ENCODE measurements at regions of chr2 and their contacts with region 1.

Region 1: DNA sequence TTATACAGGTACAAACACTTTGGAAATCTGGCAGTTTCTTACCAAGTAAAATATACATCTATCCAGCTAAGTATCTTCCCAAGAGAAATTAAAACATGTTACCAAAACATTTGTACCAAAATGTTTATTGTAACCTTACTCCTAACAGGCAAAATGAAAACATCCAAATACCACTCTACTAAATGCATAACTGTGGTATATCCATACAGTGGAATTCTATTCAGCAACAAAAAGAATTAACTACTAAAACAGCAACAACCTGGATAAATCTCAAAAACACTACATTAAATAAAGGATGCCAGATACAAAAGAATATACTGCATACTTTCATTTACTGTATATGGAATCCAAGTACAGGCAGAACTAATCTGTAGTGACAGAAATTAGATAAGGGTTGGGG is 51.1 kb downstream of the TLK1 start:
- DNase-seq: no peak
- ATAC-seq: no peak
- H3K4me3 ChIP-seq: no peak overlapping the region
- H3K4me3 Mint-ChIP-seq: no peak overlapping the region
- H3K27ac ChIP-seq: no peak overlapping the region
- H3K27ac Mint-ChIP-seq: peak overlapping the region; percentile 20
- H3K4me1 ChIP-seq: no peaks in the 10 kb centered on the region
- H3K4me1 Mint-ChIP-seq: peaks cover 52% of the 10 kb centered on the region
- H3K27me3 ChIP-seq: no peaks in the 10 kb centered on the region
- H3K27me3 Mint-ChIP-seq: no peaks in the 10 kb centered on the region
- CTCF ChIP-seq: no peak

Region 2: GRCh38 chr2:171069286-171069956 is 40.1 kb before region 1 on chr2:
- CTCF ChIA-PET with region 1: no interaction called
- POLR2A ChIA-PET with region 1: no interaction called
- intact Hi-C with region 1: no loop called
- DNase-seq: no peak
- ATAC-seq: no peak
- H3K4me3 ChIP-seq: no peak overlapping the region
- H3K4me3 Mint-ChIP-seq: no peak overlapping the region
- H3K27ac ChIP-seq: no peak overlapping the region
- H3K27ac Mint-ChIP-seq: no peak overlapping the region
- H3K4me1 ChIP-seq: no peaks in the 10 kb centered on the region
- H3K4me1 Mint-ChIP-seq: peaks cover 14% of the 10 kb centered on the region
- H3K27me3 ChIP-seq: no peaks in the 10 kb centered on the region
- H3K27me3 Mint-ChIP-seq: no peaks in the 10 kb centered on the region
- CTCF ChIP-seq: no peak

Region 3: DNA sequence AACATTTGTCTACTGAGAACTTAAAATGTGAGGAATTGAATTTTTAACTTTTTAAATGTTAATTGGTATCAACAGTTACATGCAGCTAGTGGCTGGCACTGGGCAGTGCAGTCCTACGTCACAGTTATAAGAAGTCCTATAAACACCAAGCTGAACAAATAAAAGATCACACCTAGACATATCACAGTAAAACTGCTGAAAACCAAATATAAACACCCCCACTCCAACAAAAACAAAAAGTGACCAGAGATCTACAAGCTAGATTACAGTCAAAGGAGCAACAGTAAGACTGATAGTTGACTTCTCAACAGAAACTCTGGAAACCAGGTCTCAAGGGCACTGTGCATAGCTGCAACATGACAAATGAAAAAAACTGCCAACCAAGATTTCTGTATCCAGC is 31.7 kb after region 1 on chr2:
- CTCF ChIA-PET with region 1: no interaction called
- POLR2A ChIA-PET with region 1: no interaction called
- intact Hi-C with region 1: no loop called
- DNase-seq: no peak
- ATAC-seq: no peak
- H3K4me3 ChIP-seq: no peak overlapping the region
- H3K4me3 Mint-ChIP-seq: no peak overlapping the region
- H3K27ac ChIP-seq: no peak overlapping the region
- H3K27ac Mint-ChIP-seq: no peak overlapping the region
- H3K4me1 ChIP-seq: peaks cover 29% of the 10 kb centered on the region
- H3K4me1 Mint-ChIP-seq: peaks cover 83% of the 10 kb centered on the region
- H3K27me3 ChIP-seq: no peaks in the 10 kb centered on the region
- H3K27me3 Mint-ChIP-seq: no peaks in the 10 kb centered on the region
- CTCF ChIP-seq: no peak

Region 4: DNA sequence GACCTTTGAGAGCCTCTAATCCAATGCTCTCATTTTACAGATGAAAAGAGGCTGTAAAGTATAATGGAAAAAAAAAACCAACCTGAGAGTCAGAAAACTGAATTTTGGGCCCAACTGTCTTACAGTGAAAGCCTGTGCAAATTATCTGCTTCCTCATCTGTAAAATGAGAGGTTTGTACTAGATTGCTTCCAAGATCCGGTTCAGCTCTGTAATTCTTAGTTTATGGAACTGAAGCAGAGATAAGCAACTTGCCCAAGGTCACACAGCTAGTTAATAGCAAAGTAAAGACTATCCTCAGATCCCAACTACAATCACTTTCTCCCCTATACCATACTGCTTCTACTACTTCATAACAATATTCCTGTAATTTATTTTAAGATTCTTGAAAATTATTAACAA is 44.8 kb after region 1 on chr2:
- CTCF ChIA-PET with region 1: no interaction called
- POLR2A ChIA-PET with region 1: no interaction called
- intact Hi-C with region 1: loop called in 1 of 2 experiments (anchors 5 kb)
- DNase-seq: no peak
- ATAC-seq: no peak
- H3K4me3 ChIP-seq: no peak overlapping the region
- H3K4me3 Mint-ChIP-seq: no peak overlapping the region
- H3K27ac ChIP-seq: no peak overlapping the region
- H3K27ac Mint-ChIP-seq: no peak overlapping the region
- H3K4me1 ChIP-seq: peaks cover 50% of the 10 kb centered on the region
- H3K4me1 Mint-ChIP-seq: peaks cover 86% of the 10 kb centered on the region
- H3K27me3 ChIP-seq: no peaks in the 10 kb centered on the region
- H3K27me3 Mint-ChIP-seq: no peaks in the 10 kb centered on the region
- CTCF ChIP-seq: no peak

Measured in CD8-positive, alpha-beta T cell (primary cell).